ENCODE measurements at regions of chr18 and their contacts with region 1.

Region 1: DNA sequence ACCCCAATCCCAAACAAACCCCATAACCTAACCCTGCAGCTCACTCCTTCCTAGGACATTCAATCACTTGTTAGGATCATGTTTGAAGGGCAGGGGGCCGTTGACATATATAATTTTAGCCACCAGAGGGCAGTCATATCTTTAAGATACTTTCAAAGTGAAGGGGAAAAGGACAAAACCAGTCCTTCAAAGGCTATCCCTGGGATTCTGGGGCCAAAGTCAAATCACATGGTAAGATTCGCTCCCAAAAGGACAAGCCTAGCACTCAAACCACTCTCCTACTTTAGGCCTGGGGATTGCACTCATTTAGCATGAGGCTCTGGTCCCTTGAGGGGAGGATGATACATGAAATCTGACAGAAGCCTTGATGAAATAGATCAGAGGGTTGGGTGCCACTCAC is 44.6 kb downstream of the HAUS1 start:
- DNase-seq: peak; percentile 67
- ATAC-seq: peak; percentile 10
- H3K4me3 ChIP-seq: no peak overlapping the region
- H3K27ac ChIP-seq: no peak overlapping the region
- H3K4me1 ChIP-seq: peaks cover 18% of the 10 kb centered on the region
- H3K27me3 ChIP-seq: no peaks in the 10 kb centered on the region
- CTCF ChIP-seq: peak; percentile 66

Region 2: GRCh38 chr18:46213295-46213694 is 64.5 kb after region 1 on chr18:
- CTCF ChIA-PET with region 1: no interaction called
- POLR2A ChIA-PET with region 1: no interaction called
- intact Hi-C with region 1: loop called (anchors 1 kb)
- DNase-seq: peak; percentile 6
- ATAC-seq: no peak
- H3K4me3 ChIP-seq: no peak overlapping the region
- H3K27ac ChIP-seq: no peak overlapping the region
- H3K4me1 ChIP-seq: peaks cover 7% of the 10 kb centered on the region; the same call in 1 of the 2 replicates
- H3K27me3 ChIP-seq: no peaks in the 10 kb centered on the region
- CTCF ChIP-seq: peak; percentile 41; the same call in 1 of the 2 replicates

Region 3: DNA sequence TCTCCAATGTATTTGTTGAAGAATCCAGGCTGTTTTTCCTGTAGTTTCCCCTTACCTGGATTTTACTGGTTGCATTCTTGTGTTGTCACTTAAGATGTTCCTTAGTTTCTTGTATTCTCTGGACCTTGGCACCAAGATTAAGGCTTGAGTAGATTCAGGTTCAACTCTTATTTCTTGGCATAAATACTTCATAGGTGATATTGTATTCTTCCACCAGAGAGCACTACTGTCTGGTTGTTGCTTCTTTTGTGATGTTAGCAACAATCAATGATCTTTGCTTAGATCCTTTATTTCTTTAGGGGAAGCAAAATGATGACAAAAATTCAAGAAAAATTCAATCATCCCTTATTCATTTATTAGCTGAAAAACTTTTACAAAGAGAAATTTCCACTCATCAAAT is 297.1 kb after region 1 on chr18:
- CTCF ChIA-PET with region 1: no interaction called
- POLR2A ChIA-PET with region 1: interaction called, 12 read pairs
- intact Hi-C with region 1: no loop called
- DNase-seq: no peak
- ATAC-seq: no peak
- H3K4me3 ChIP-seq: no peak overlapping the region
- H3K27ac ChIP-seq: no peak overlapping the region
- H3K4me1 ChIP-seq: no peaks in the 10 kb centered on the region
- H3K27me3 ChIP-seq: no peaks in the 10 kb centered on the region
- CTCF ChIP-seq: peak; percentile 33

Region 4: GRCh38 chr18:46660955-46661749 is 512.3 kb after region 1 on chr18:
- CTCF ChIA-PET with region 1: no interaction called
- POLR2A ChIA-PET with region 1: no interaction called
- intact Hi-C with region 1: loop called (anchors 1 kb)
- DNase-seq: no peak
- ATAC-seq: no peak
- H3K4me3 ChIP-seq: no peak overlapping the region
- H3K27ac ChIP-seq: no peak overlapping the region
- H3K4me1 ChIP-seq: no peaks in the 10 kb centered on the region
- H3K27me3 ChIP-seq: no peaks in the 10 kb centered on the region
- CTCF ChIP-seq: no peak

Measured in PC-3 (cell line).